SK-N-SH (cell line): ENCODE measurements at regions of chr13 and their contacts with region 1.

Region 1: GRCh38 chr13:100014621-100015020 is 33.0 kb downstream of the ZIC2 start:
- DNase-seq: no peak
- H3K4me3 ChIP-seq: no peak overlapping the region
- H3K27ac ChIP-seq: no peak overlapping the region
- H3K4me1 ChIP-seq: no peaks in the 10 kb centered on the region
- H3K27me3 ChIP-seq: peaks cover 4% of the 10 kb centered on the region; the same call in 1 of the 2 replicates
- CTCF ChIP-seq: no peak
- EP300 ChIP-seq: no peak
- RAD21 ChIP-seq: no peak

Region 2: GRCh38 chr13:99501184-99501847 is 513.3 kb before region 1 on chr13 and contains the start of gene TM9SF2:
- CTCF ChIA-PET with region 1: no interaction called
- POLR2A ChIA-PET with region 1: no interaction called
- DNase-seq: peak; percentile 95
- H3K4me3 ChIP-seq: peak within 1 kb of the TSS; percentile 91 to 98
- H3K27ac ChIP-seq: peak within 1 kb of the TSS; percentile 84 to 85
- H3K4me1 ChIP-seq: peaks cover 5 to 26% of the 10 kb centered on the region in 2 experiments; a peak in 3 of 4 replicates
- H3K27me3 ChIP-seq: no peaks in the 10 kb centered on the region
- CTCF ChIP-seq: no peak
- EP300 ChIP-seq: 0 out of 4 replicates have a peak, but pooled peaks have one; percentile 7 to 23
- RAD21 ChIP-seq: no peak
- polyA plus RNA-seq, gene TM9SF2: 49.8 and 69.8 TPM in 2 replicates

Region 3: DNA sequence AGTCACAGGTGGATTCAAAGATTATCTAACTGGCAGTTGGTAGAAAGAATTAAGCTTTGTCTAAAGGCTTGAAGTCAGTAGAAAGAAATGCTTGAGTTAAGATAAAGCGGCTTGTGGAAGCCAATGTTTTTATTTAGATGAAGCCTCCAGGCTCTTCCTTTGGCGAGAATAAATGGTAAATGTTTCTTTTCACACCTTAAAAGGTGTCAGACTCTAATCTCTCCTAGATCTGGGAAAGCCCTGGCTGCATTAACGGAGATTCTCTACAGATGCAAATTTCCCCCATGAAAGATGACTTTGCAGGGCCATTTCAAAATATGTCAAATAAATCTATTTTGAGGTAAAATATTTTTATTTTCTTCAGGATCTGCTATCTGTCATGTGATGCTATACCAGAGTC is 36.4 kb after region 1 on chr13:
- CTCF ChIA-PET with region 1: no interaction called
- POLR2A ChIA-PET with region 1: interaction called, 10 read pairs
- DNase-seq: no peak
- H3K4me3 ChIP-seq: no peak overlapping the region
- H3K27ac ChIP-seq: no peak overlapping the region
- H3K4me1 ChIP-seq: no peaks in the 10 kb centered on the region
- H3K27me3 ChIP-seq: no peaks in the 10 kb centered on the region
- CTCF ChIP-seq: no peak
- EP300 ChIP-seq: no peak
- RAD21 ChIP-seq: no peak